ENCODE measurements at regions of chr10 and their contacts with region 1.

Region 1: DNA sequence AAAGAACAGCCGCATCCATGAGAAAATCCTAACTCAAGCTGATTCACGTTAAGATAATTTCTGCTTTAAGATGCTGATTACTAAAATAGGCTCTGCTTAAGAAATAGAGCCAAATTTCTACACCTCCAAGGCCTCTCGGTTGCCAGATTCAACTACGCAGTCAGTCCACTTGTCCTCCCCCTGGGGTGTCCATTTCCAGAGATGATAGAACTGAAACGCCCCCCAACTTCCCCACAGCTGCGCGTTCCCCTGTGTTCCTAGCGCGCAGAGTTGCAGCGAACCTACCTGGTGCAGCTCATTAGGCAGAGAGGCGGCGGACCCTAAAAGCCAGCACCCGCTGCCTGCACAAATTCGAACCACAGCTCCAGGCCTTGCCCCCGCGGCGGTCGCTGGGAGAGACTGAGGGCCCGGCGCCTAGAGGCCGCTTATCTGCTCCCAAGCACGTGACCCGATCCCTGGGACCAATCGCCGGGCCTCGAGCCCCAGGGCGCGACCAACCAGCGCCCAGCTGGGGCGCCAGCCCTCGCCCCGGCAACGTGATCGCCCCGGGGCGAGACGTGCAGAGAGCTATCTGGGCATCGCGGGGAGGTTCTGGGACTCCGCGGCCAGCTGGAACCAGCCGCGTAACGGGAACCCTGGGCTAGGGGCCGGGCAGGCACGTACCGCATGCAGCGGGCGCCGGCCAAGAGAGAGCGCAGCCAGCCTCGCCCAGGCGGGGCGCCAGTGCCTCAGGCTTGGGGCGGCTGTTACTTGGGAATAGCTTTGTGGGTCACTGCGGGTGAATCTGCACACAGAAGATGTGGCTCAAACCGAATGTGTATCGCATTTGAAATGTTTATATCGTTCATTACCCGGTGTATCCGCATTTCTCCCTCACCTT is at the start of gene PPP1R3C:
- DNase-seq: peak; percentile 85
- ATAC-seq: peak; percentile 90
- H3K4me3 Mint-ChIP-seq: peak within 1 kb of the TSS; percentile 74
- H3K27ac Mint-ChIP-seq: no peak within 1 kb of the TSS
- H3K4me1 Mint-ChIP-seq: peaks cover 13% of the 10 kb centered on the region
- H3K27me3 Mint-ChIP-seq: peaks cover 50% of the 10 kb centered on the region
- CTCF ChIP-seq: no peak
- total RNA-seq, gene PPP1R3C: 1.5 to 3.3 TPM (median 2.8 TPM) in 3 replicates

Region 2: GRCh38 chr10:91745074-91745832 is 112.3 kb after region 1 on chr10:
- CTCF ChIA-PET with region 1: interaction called, 16 read pairs
- POLR2A ChIA-PET with region 1: no interaction called
- DNase-seq: peak; percentile 68
- ATAC-seq: peak; percentile 100
- H3K4me3 Mint-ChIP-seq: peak overlapping the region; percentile 55
- H3K27ac Mint-ChIP-seq: peak overlapping the region; percentile 69; the same call in 1 of the 2 replicates
- H3K4me1 Mint-ChIP-seq: peaks cover 10% of the 10 kb centered on the region
- H3K27me3 Mint-ChIP-seq: peaks cover 13% of the 10 kb centered on the region
- CTCF ChIP-seq: no peak